ENCODE measurements at regions of chr3 and their contacts with region 1.

Region 1: DNA sequence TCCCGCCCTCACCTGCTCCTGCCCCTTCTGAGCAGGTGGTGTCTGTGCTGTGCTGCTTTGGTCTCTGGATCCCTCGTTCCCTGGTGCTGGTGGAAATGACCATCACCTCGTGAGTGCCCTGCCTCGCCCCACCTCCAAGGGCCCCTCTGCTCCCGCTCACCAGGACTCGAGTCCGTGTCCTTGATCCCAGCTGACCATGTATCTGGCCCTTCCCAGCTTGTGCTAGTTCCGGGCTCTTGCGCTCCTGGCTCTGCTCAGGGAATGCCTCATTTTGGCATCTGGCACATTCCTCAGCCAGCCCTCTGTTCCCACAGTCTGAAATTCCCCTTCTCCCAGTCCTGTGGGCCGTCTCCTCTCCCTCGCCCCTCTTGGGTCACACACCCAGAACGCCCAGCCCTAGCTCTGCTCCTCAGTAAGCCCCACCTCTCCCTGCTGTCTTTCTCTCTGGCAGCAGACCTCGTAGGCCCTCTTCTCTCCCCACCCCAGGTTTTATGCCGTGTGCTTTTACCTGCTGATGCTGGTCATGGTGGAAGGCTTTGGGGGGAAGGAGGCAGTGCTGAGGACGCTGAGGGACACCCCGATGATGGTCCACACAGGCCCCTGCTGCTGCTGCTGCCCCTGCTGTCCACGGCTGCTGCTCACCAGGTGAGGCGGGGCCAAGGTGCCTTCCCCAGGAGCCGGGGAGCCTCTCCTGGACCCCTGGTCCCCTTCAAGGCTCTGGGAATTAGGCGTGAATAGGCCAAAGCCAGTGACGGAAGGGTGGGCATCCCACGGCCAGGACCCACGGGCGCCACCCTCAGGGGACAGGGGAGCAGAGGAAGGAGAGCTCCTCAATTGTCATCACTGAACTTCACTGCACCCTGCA is 11.5 kb downstream of the SLC51A start:
- DNase-seq: no peak
- H3K4me3 ChIP-seq: no peak overlapping the region
- H3K27ac ChIP-seq: no peak overlapping the region
- H3K4me1 ChIP-seq: no peaks in the 10 kb centered on the region
- H3K27me3 ChIP-seq: no peaks in the 10 kb centered on the region
- CTCF ChIP-seq: 0 out of 2 replicates have a peak, but pooled peaks have one; percentile 19

Region 2: DNA sequence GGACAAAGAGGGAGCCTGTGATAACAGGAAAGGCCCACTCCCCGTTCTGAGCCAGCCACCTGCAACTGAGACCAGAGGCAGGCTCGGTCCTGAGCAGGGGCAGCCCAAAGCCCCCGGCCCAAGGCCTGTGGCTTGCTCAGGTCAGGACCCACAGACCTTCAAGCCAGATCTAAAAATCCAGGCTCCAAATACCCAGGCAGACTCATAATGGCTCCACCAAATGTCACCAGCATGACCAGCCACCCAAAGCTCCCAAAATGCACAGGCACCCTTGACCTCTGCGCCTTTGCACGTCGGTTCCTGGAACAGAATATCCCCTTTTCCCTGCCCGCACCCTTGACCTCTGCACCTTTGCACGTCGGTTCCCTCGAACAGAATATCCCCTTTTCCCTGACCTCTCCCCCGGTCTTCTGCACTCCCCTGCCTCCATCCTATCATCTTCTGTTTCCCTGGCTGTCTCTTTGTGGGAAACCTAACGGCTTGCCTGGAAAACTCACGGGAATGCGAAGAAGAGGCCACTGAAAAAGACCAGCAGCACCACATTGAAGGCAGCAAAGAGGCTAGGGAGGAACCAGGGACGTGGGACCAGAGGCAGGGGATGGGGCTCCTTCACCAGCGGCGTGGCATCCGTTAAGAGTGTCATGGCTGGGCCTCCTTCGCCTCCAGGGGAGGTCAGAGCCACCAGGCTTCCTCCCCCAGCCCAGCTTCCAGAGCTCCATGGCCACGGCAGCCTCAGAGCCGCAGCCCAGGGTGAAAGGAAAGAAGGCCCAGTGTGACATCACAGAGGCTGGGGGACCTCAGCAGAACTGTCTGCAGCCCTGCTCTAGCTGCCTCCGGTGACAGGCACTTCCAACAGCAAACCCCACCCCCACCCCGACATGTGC is 16.9 kb before region 1 on chr3 and contains the start of gene ZDHHC19:
- CTCF ChIA-PET with region 1: no interaction called
- POLR2A ChIA-PET with region 1: interaction called, 10 read pairs
- intact Hi-C with region 1: no loop called
- DNase-seq: no peak
- H3K4me3 ChIP-seq: no peak within 1 kb of the TSS
- H3K27ac ChIP-seq: no peak within 1 kb of the TSS
- H3K4me1 ChIP-seq: no peaks in the 10 kb centered on the region
- H3K27me3 ChIP-seq: no peaks in the 10 kb centered on the region
- CTCF ChIP-seq: no peak
- total RNA-seq, gene ZDHHC19: not detected in 2 replicates

Region 3: DNA sequence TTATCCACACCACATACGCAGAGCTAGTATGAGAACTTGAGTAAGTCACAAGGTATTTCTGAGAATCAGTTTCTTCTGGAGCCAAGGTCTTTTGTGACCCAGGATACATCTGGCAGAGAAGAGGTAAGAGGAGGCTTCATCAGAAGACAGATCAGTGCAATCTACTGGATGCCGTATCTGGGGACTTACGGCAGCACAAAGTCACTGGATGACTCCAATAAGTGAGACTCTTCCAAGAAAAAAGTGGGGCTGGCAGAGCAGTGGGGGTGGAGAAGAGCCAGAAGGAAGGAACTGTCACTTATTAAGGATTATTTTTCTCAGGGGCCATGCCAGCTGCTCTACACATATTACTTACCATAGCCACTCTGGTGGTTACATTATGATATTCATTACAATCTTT is 235.9 kb after region 1 on chr3:
- CTCF ChIA-PET with region 1: no interaction called
- POLR2A ChIA-PET with region 1: no interaction called
- intact Hi-C with region 1: no loop called
- DNase-seq: no peak
- H3K4me3 ChIP-seq: no peak overlapping the region
- H3K27ac ChIP-seq: no peak overlapping the region
- H3K4me1 ChIP-seq: no peaks in the 10 kb centered on the region
- H3K27me3 ChIP-seq: no peaks in the 10 kb centered on the region
- CTCF ChIP-seq: no peak